ENCODE measurements at regions of chr11 and their contacts with region 1.

Region 1: DNA sequence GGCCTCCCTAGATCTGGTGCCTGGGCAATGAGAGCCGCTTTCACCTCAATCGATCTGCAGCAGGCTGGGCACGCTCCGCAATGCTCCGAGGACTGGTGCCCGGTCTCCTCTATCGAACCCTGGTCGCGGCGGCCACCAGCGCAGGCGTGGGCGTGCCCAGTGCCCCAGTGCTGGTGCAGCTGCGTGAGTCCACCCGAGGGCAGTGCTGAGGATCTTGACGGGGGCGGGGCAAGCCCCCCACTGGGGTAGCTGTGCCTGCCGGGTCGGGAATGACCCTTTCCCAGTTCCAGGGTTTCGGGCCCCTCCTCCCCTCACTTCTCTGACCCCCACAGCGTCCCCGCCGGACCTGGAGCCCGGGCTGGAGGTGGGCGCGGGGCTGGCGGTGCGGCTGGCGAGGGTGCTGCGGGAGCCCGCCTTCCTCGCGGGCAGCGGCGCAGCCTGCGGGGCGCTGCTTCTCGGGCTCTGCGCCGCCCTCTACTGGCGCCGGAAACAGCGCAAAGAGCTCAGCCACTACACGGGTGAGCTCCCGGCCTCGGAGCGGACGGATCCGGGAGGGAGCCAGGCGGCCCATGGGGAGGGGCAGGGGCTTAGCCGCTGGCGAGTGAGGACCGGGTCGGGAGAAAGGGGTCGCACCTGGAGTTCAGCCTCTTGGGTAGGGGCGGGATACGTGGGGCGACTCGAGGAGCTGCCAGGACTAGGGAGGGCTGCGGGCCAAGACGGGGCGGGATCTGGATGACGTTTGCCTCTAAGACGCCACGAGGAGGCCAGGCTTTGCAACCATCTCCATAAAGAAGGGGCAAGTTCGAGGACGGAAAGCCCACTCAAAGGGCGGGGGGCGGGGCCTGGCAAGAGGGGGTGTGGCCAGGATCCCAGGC is 10.9 kb downstream of the ROBO3 start:
- DNase-seq: peak; percentile 88
- ATAC-seq: peak; percentile 98
- H3K4me3 Mint-ChIP-seq: peak overlapping the region; percentile 77
- H3K27ac Mint-ChIP-seq: peak overlapping the region; percentile 58
- H3K4me1 Mint-ChIP-seq: peaks cover 16% of the 10 kb centered on the region
- H3K27me3 Mint-ChIP-seq: peaks cover 27% of the 10 kb centered on the region

Region 2: GRCh38 chr11:124075841-124076651 is 800.1 kb before region 1 on chr11:
- CTCF ChIA-PET with region 1: no interaction called
- POLR2A ChIA-PET with region 1: no interaction called
- intact Hi-C with region 1: no loop called
- DNase-seq: peak; percentile 44
- ATAC-seq: peak; percentile 55
- H3K4me3 Mint-ChIP-seq: peak overlapping the region; percentile 32
- H3K27ac Mint-ChIP-seq: no peak overlapping the region
- H3K4me1 Mint-ChIP-seq: peaks cover 10% of the 10 kb centered on the region
- H3K27me3 Mint-ChIP-seq: peaks cover 26% of the 10 kb centered on the region

Region 3: DNA sequence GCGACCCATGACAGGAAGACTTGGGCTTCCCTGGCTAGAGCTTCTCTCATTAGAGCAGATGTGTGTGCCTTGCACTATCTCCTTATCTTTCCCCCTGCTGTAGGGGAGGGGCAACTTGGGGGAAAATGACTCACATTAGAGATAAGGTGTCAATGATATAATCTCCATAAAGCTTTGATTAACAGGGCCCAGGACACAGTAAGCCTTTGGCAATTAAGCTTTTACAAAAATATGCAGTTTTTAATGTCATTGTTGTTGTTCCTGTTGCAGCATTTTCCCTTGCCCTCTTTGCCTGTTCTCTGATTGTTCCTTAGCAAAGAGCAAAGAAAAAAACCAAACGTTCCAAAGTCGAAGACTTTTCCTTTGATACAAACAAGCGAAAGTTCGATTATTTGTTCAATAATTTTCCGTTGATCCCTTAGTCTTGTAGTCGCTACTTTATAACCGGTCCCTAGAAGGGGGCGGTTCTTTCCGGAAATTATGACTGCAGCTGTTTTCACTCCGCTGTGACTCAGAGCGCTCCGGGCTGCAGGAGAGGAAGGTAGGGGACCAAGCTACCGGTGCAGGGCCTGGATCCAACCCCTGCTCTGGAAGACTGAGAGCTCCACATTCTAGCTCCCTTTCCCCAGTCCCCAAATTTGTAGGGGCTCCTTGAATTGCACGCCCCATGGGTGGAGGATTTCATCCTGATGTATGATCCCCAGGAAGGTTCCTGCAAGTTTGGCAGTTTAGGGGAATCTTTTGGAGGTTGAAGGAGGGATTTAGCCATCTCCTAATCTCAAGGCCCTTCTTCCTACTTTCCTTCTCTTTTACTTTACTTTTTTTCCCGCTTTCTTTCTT is 761.0 kb before region 1 on chr11 and contains the start of gene VWA5A:
- CTCF ChIA-PET with region 1: no interaction called
- POLR2A ChIA-PET with region 1: no interaction called
- intact Hi-C with region 1: loop called in 1 of 2 experiments (anchors 10 kb)
- DNase-seq: peak; percentile 90
- ATAC-seq: peak; percentile 99
- H3K4me3 Mint-ChIP-seq: peak within 1 kb of the TSS; percentile 78
- H3K27ac Mint-ChIP-seq: peak within 1 kb of the TSS; percentile 87
- H3K4me1 Mint-ChIP-seq: peaks cover 23% of the 10 kb centered on the region
- H3K27me3 Mint-ChIP-seq: peaks cover 6% of the 10 kb centered on the region
- total RNA-seq, gene VWA5A: 8.6 to 8.8 TPM

Region 4: GRCh38 chr11:124746621-124747243 is 129.4 kb before region 1 on chr11:
- CTCF ChIA-PET with region 1: interaction called, 5 read pairs
- POLR2A ChIA-PET with region 1: interaction called, 3 read pairs
- intact Hi-C with region 1: loop called in 1 of 2 experiments (anchors 1 kb)
- DNase-seq: peak; percentile 88
- ATAC-seq: peak; percentile 92
- H3K4me3 Mint-ChIP-seq: peak overlapping the region; percentile 81
- H3K27ac Mint-ChIP-seq: peak overlapping the region; percentile 90
- H3K4me1 Mint-ChIP-seq: peaks cover 11% of the 10 kb centered on the region
- H3K27me3 Mint-ChIP-seq: peaks cover 2% of the 10 kb centered on the region

Region 5: DNA sequence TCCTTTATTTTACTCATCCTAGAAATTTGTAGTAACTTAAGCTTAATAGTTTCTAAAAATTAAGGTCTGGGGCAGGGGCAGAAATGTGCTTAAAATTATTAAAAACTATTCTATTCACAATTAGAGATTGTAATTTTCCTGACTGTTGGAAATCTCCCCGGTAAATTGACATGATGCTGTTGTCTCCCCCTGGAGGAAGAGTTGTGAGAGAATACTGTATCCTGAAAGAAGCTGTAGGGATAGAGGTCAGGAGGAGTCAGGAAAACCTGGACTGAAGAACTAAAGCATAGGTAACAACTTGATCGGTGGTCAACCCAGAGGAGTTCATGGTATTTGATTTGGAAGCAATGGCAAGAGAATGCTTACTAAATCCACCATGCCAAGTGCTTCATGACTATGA is 97.9 kb before region 1 on chr11:
- CTCF ChIA-PET with region 1: no interaction called
- POLR2A ChIA-PET with region 1: no interaction called
- intact Hi-C with region 1: no loop called
- DNase-seq: no peak
- ATAC-seq: no peak
- H3K4me3 Mint-ChIP-seq: no peak overlapping the region
- H3K27ac Mint-ChIP-seq: no peak overlapping the region
- H3K4me1 Mint-ChIP-seq: peaks cover 15% of the 10 kb centered on the region
- H3K27me3 Mint-ChIP-seq: no peaks in the 10 kb centered on the region

Region 6: DNA sequence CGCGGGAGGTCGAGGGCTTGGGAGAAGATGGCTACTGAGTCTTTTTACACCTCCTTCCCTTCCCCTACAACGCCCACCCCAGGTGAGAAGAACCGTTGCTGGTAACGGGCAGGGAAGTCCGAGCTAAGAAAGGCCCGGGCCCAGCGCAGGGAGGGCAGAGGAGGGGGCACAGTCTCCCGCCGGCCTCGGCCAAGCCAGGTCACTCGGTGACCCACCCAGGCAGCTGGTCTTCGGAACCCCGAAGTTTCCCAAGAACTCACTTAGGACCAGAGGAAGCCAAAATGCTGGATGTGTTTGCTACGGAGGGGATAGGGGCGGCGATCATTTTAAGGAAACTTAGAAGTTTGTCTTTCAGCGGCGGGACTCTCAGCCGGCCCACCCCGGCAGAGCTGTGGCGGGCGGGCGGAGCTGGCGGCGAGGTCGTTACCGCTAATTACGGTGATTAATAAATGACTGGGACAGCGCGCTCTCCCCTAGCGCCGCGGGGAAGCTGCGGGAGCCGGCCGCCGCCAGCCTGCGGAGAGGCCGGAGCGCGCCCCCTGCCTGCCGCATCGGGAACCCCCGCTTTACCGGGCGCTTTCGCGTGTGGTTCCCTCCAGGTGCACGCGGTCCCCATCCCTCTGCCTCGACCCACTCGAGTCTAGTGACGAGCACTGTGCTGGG is 10.1 kb before region 1 on chr11:
- CTCF ChIA-PET with region 1: interaction called, 19 read pairs
- POLR2A ChIA-PET with region 1: no interaction called
- intact Hi-C with region 1: loop called in 1 of 2 experiments (anchors 1 kb)
- DNase-seq: peak; percentile 77
- ATAC-seq: peak; percentile 60
- H3K4me3 Mint-ChIP-seq: no peak overlapping the region
- H3K27ac Mint-ChIP-seq: no peak overlapping the region
- H3K4me1 Mint-ChIP-seq: peaks cover 31% of the 10 kb centered on the region
- H3K27me3 Mint-ChIP-seq: peaks cover 81% of the 10 kb centered on the region

Region 7: DNA sequence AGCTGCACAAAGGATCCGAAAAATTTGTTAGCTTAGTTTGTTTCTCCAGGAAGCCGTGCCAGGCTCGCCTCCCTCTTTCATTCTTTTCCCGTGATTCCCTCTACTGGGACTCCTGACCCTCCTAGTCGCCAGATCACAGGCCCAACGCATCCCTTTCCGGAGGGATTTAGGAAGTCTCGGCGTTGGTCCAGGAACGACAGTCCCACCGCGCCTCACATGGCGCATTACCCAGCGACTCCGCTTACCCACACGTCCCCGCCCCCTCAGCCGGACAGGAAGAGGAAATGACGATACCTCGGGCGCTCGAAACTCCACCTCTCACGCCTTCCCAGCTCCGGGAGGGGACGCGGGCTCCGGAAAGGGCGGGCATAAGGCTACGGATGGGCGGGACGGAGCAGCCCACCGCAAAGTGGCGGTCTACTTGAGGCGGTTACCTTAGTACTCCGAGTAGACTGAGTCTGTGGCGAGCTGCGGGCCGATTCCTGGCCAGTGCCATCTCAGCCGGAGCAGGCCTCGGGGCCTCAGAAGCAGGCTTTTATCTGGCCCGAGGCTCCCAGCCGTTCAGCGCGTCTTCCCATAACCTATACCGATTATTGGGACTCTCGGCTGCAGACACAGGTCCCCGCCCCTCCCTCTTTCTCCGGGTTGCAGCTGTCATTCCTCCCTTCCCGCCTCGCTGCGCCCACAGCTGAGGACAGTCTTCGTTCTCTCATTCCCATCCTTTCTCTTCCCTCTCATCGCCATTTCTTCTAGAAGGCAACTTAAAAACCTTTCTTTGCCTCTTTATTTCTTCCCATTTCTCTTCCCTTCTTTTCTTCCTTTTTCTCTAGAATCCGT is 77.8 kb after region 1 on chr11 and contains the start of gene CCDC15:
- CTCF ChIA-PET with region 1: interaction called, 13 read pairs
- POLR2A ChIA-PET with region 1: no interaction called
- intact Hi-C with region 1: loop called (anchors 1 kb)
- DNase-seq: peak; percentile 97
- ATAC-seq: peak; percentile 98
- H3K4me3 Mint-ChIP-seq: no peak within 1 kb of the TSS
- H3K27ac Mint-ChIP-seq: no peak within 1 kb of the TSS
- H3K4me1 Mint-ChIP-seq: peaks cover 4% of the 10 kb centered on the region
- H3K27me3 Mint-ChIP-seq: no peaks in the 10 kb centered on the region
- total RNA-seq, gene CCDC15: 5.6 to 6.7 TPM

Region 8: DNA sequence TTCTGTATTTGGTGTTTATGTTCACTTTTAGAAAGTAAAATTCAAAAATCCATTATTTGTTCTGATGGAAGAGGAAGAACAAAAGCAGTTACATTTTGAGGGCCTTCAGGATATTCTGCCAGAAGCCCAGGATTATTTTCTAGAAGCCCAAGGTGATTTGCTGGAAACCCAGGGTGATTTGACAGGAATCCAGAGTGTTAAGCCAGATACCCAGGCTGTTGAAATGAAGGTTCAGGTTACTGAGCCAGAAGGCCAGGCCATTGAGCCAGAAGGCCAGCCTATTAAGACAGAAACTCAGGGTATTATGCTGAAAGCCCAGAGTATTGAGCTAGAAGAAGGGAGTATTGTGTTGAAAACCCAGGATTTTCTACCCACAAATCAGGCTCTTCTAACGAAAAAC is 110.9 kb after region 1 on chr11:
- CTCF ChIA-PET with region 1: no interaction called
- POLR2A ChIA-PET with region 1: no interaction called
- intact Hi-C with region 1: no loop called
- DNase-seq: no peak
- ATAC-seq: no peak
- H3K4me3 Mint-ChIP-seq: no peak overlapping the region
- H3K27ac Mint-ChIP-seq: no peak overlapping the region
- H3K4me1 Mint-ChIP-seq: no peaks in the 10 kb centered on the region
- H3K27me3 Mint-ChIP-seq: no peaks in the 10 kb centered on the region

Region 9: GRCh38 chr11:125559888-125560287 is 683.7 kb after region 1 on chr11:
- CTCF ChIA-PET with region 1: no interaction called
- POLR2A ChIA-PET with region 1: no interaction called
- intact Hi-C with region 1: no loop called
- DNase-seq: no peak
- ATAC-seq: no peak
- H3K4me3 Mint-ChIP-seq: no peak overlapping the region
- H3K27ac Mint-ChIP-seq: no peak overlapping the region
- H3K4me1 Mint-ChIP-seq: no peaks in the 10 kb centered on the region
- H3K27me3 Mint-ChIP-seq: peaks cover 3% of the 10 kb centered on the region

Measured in activated CD4-positive, alpha-beta T cell treated with anti-CD3 and anti-CD28 coated beads for 36 hours (primary cell).